ENCODE measurements at regions of chr17 and their contacts with region 1.

Region 1: DNA sequence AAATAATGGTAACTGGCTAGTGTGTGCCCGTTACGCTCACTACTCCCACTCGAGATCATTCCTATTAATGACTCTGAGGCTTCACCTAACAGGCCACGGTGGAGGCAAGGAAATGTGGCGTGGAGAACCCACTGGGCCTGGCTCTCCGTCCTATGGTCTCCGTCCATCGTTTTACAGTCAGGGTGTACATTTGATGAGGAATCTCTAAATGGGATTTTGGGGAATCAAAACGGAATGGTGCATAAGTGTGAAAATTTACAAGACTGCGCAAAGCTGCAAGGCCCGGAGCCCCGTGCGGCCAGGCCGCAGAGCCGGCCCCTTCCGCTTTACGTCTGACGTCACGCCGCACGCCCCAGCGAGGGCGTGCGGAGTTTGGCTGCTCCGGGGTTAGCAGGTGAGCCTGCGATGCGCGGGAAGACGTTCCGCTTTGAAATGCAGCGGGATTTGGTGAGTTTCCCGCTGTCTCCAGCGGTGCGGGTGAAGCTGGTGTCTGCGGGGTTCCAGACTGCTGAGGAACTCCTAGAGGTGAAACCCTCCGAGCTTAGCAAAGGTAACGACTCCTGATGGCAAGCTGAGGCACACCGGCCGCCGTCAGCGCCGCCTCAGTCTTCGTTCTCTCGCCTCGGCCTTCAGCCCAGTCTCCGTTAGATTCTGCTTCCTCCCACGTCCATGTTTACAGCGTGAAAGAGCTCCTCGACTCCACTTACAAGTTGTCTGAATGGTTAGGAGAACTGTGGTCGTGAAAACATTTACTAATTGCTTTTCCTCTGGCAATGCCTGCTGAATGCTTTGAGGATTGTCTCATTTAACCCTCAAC is at the start of gene RAD51C:
- DNase-seq: peak; percentile 91
- H3K4me3 ChIP-seq: peak within 1 kb of the TSS; percentile 58 to 69 (median 66)
- H3K27ac ChIP-seq: peak within 1 kb of the TSS; percentile 82 to 91 (median 84)
- H3K4me1 ChIP-seq: peaks cover 0 to 15% (median 13%) of the 10 kb centered on the region in 4 donors
- H3K27me3 ChIP-seq: no peaks in the 10 kb centered on the region
- CTCF ChIP-seq: no peak
- EP300 ChIP-seq: peak in 1 of 4 donors; percentile 5
- POLR2A ChIP-seq: peak; percentile 62 to 74
- total RNA-seq, gene RAD51C: 16.8 to 25.2 (median 19.0) TPM

Region 2: GRCh38 chr17:58277107-58277801 is 415.2 kb before region 1 on chr17:
- intact Hi-C with region 1: no loop called
- DNase-seq: no peak
- H3K4me3 ChIP-seq: no peak overlapping the region
- H3K27ac ChIP-seq: no peak overlapping the region
- H3K4me1 ChIP-seq: peaks cover 0 to 10% (median 4%) of the 10 kb centered on the region in 4 donors
- H3K27me3 ChIP-seq: peaks cover 0 to 28% (median 5%) of the 10 kb centered on the region in 3 donors
- CTCF ChIP-seq: no peak
- EP300 ChIP-seq: no peak
- POLR2A ChIP-seq: no peak

Region 3: DNA sequence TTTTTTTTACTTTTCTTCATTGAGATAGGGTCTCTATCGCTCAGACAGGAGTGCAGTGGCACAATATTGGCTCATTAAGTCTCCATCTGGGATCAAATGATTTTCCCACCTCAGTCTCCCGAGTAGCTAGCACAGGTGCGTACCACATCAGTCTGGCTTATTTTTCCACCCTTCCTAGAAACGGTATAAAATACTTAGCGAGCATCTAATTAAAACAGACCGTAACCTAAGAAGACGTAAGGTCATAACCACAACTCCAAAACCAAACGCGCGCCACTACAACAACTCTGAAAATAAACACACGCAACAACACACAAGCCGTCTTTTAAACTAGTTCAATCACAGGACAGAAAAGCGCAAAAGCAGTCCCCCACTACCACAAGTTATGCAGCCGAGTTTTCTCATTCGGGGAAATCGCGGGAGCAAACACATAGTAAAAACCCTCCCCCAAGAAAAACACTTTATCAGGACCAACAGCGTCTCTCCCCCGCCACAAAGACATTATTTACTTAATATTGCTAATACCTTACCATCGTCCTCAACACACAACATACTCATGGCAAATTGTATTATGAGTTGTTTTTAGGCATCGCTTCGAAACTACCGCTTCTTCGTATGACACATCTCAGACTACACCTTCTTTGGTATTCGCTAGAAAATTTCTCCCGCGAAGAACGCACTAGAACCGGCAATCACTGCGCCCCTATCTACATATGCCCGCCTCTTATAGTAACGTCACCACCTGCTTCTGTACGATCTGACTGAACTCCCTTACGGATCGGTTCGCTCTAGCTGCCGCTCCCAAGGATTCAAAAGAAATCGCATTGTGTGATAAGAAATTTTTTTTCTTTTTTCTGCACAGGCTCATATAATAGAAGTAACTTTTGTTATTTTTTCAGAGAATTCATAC is 33.4 kb before region 1 on chr17:
- intact Hi-C with region 1: loop called (anchors 2 kb)
- DNase-seq: peak; percentile 91
- H3K4me3 ChIP-seq: peak overlapping the region; percentile 26 to 50 (median 44)
- H3K27ac ChIP-seq: peak overlapping the region; percentile 74 to 85 (median 77)
- H3K4me1 ChIP-seq: peaks cover 0 to 9% (median 5%) of the 10 kb centered on the region in 4 donors
- H3K27me3 ChIP-seq: no peaks in the 10 kb centered on the region
- CTCF ChIP-seq: no peak
- EP300 ChIP-seq: peak in 1 of 4 donors; percentile 25
- POLR2A ChIP-seq: peak; percentile 88 to 98

Measured in sigmoid colon (tissue), 7 donors.